ENCODE measurements at regions of chr2 and their contacts with region 1.

Region 1: DNA sequence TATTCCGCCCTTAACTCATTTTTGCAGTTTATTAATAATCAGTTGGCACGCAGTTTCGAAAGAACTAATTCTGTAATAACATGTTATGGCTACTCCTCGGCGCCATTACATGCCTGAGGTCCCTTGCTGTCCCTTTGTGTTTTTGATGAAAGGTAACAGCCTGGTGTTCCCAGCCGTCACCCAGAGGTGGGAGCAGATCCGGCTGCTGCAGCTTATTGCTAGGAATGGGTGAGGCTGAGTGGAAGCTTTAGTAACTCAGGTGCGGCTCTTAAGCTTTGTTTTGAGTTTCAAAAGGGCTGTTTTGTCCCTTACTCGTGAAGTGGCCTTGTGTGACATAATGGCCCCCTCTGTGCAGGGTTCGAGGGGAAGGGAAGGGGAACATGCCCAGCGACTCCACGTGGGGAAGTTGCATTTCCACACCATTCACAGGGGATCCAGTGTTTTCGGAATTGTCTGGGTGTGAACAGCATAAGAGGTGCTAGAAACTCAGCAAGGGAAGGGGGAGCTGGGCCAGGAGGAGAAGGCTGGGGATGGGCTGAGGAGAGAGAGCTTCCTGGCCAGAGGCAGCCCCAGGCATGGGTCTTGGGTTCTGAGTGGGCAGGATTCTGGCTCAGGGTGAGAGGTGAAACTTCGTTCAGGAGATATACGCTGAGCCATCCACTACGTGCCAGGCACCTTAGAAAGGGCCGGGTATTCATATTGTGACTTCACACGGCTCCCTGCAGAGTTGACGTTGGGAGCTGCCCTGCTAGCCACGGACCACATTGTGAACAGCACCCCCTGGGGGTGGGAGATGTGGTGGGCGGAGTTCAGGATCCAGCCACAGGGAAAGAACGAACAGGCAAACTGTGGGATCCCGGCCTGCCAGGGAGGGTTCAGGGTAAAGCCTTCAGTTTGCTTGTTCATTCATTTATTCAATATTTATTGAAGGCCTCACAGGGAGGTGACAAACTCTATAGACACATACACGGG is 84.4 kb downstream of the TGOLN2 start:
- DNase-seq: peak; percentile 62 to 66
- ATAC-seq: peak in 7 of 8 donors; percentile 30 to 73 (median 52)
- H3K4me3 ChIP-seq: no peak overlapping the region
- H3K27ac ChIP-seq: no peak overlapping the region
- H3K4me1 ChIP-seq: peaks cover 7 to 91% (median 55%) of the 10 kb centered on the region in 9 donors
- H3K27me3 ChIP-seq: no peaks in the 10 kb centered on the region
- CTCF ChIP-seq: peak; percentile 17 to 70 (median 59)

Region 2: DNA sequence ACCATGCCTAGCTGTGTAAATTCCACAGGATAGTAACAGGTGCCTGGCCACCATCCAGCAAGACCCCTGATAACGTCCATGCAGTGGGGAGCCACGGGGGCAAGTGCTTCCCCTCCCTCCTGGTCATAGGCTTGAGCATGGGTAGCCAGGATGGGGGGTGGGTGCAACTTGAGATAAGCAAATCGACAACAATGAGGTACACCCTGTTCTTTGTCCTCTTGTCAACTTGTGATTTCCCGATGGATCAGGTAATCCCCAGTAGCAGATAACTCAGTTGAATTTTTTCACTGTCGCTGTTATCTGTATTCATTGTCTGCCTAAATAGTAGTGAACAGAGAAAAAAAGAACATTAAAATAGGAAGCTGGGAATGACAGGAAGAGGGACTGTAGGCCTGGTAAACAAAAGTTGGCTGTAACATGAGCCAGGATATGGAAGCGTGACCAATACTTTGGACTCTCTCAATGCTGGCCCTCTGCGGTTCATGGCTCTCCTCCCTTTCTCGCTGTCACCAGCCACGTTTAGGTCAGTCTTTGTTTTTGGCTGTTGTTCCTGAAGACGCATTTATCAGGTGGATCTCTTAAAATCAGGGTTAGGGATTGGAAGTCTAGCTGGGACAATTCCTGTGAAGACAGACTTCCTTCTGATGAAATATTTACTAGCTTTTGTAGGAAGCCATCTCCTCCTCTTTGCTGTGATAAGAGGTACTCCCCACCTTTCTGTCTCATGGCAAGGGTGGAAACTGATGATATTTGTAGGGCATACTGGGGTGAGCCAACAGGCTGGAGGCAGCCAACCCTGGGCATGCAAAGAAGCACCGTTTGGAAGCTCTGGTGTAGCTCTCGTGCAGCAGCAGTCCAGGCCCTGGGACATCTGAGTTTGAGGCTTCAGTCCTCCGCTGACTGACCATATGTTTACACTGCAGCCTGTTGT is 67.8 kb before region 1 on chr2:
- intact Hi-C with region 1: loop called in 1 of 10 experiments (anchors 2 kb)
- DNase-seq: peak in 1 of 2 donors; percentile 43
- ATAC-seq: peak in 7 of 8 donors; percentile 61 to 81 (median 78)
- H3K4me3 ChIP-seq: no peak overlapping the region
- H3K27ac ChIP-seq: peak overlapping the region in 9 of 10 donors; percentile 20 to 70 (median 47)
- H3K4me1 ChIP-seq: peaks cover 4 to 77% (median 62%) of the 10 kb centered on the region in 9 donors
- H3K27me3 ChIP-seq: no peaks in the 10 kb centered on the region
- CTCF ChIP-seq: no peak

Region 3: GRCh38 chr2:85221067-85221691 is 22.2 kb before region 1 on chr2:
- intact Hi-C with region 1: no loop called
- DNase-seq: no peak
- ATAC-seq: peak in 4 of 8 donors; percentile 47 to 86 (median 71)
- H3K4me3 ChIP-seq: no peak overlapping the region
- H3K27ac ChIP-seq: no peak overlapping the region
- H3K4me1 ChIP-seq: peaks cover 0 to 32% (median 18%) of the 10 kb centered on the region in 9 donors
- H3K27me3 ChIP-seq: no peaks in the 10 kb centered on the region
- CTCF ChIP-seq: no peak

Region 4: DNA sequence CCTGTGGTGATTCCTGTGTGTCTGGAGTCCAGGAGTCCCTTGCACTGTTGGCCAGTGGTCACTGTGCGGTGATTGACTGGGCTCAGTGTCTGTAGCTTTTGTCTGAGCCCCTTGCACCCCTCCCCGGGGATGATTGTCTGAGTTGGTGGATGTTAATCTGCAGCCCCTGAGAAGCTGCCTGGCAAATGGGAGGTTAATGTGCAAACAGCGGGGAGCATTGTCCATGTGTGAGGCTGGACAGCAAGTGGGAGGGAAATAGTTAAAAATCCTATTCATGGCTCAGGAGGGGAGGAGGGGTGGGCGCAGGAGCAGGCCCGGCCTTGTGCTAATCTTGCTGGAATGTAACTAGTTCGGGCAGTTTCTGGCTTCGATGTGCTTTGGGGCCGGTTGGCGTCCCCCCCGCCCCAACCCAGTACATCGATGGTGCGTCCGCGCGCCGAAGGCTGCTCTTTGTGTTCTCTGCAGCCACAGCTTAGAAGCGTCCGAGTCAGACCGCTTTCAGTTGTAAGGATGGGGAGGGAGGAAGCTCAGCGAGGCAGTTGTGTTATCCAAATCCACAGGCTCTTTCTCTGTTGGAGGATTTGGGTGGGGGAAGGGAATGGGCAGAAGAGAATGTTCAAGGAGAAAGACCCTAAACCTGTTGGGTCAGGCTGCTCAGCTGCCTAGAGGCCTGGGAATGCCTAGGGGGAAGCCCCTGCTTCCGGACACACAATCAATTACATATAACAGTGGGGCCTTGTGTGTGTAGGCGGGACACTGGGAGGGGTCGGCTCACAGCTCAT is 12.6 kb after region 1 on chr2:
- intact Hi-C with region 1: no loop called
- DNase-seq: no peak
- ATAC-seq: peak in 5 of 8 donors; percentile 44 to 52 (median 48)
- H3K4me3 ChIP-seq: peak overlapping the region in 5 of 10 donors; percentile 10 to 28 (median 23)
- H3K27ac ChIP-seq: peak overlapping the region; percentile 14 to 91 (median 82)
- H3K4me1 ChIP-seq: peaks cover 39 to 90% (median 71%) of the 10 kb centered on the region in 9 donors
- H3K27me3 ChIP-seq: no peaks in the 10 kb centered on the region
- CTCF ChIP-seq: no peak

Region 5: GRCh38 chr2:85288244-85288725 is 44.9 kb after region 1 on chr2:
- intact Hi-C with region 1: loop called in 2 of 10 experiments (anchors 5 kb)
- DNase-seq: no peak
- ATAC-seq: no peak
- H3K4me3 ChIP-seq: no peak overlapping the region
- H3K27ac ChIP-seq: no peak overlapping the region
- H3K4me1 ChIP-seq: peaks cover 0 to 18% (median 12%) of the 10 kb centered on the region in 9 donors
- H3K27me3 ChIP-seq: no peaks in the 10 kb centered on the region
- CTCF ChIP-seq: no peak